Common myeloid progenitor, CD34-positive (primary cell): ENCODE measurements at regions of chr3 and their contacts with region 1.

Region 1: DNA sequence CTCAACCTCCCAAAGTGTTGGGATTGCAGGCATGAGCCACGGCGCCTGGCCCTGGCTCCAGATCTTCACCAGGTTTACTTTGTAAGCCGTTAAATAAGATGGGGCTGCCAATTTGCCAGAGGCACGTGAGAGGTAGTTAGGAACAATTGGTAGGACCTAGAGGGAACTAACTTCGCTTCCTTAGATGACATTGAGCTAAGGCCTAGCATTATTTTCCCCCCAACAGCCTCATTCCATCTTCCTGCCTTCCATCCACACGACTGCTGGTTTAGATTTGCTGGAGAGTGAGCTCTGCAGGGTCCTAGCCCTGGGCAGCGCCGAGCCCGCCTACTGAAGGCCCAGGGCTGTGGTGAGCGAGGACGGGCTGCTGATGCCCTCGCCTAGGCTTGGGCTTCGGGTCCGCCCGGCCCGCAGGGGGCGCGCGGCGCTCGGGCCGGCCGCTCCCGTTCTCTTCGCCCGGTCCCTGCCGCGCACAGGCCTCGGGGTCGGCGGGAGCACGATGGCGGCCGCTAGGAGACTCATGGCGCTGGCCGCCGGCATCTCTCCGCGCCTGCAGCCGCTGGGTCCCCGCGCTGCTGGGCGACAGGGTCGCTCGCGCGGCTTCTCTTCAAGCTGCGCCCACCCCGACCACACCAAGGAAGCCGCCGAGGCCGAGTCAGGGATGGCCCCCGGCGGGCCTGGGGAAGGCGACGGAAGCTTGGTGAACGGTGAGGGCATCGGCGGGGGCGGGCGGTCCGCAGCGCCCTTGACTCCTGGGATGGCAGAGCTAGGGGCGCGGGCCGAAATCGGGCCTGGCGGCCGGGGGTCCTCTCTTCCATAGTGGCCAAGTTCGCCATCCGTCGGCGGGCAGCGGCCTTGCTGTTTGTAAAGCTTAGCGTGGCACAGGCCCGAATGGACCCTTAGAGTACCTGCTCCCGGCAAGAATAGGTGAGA is 21.9 kb downstream of the DHX30 start:
- DNase-seq: peak; percentile 80 to 86 (median 84)
- H3K4me3 ChIP-seq: peak overlapping the region; percentile 58 to 93 (median 85)
- H3K27ac ChIP-seq: peak overlapping the region; percentile 18 to 85
- H3K4me1 ChIP-seq: peaks cover 0 to 21% (median 18%) of the 10 kb centered on the region in 4 experiments
- H3K27me3 ChIP-seq: no peaks in the 10 kb centered on the region

Region 2: DNA sequence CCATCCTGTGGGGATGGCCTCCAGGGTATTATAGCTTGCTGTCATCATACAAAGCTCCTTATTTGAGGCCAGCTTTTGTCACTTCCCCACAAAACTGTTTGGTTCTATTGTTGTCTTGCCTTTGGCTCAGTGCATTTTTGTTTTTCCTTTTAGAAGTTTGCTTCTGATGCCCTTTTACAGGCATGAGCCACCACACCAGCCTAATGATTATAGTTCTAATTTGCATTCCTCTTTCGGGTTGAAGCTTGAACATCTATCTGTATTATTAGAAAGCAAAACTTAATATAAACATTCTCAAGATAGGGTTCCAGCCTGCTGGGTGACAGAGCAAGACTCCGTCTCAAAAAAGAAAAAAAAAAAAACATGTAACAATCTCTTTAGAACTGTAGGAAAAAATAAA is 82.9 kb before region 1 on chr3:
- CTCF ChIA-PET with region 1: no interaction called
- POLR2A ChIA-PET with region 1: no interaction called
- DNase-seq: no peak
- H3K4me3 ChIP-seq: no peak overlapping the region
- H3K27ac ChIP-seq: no peak overlapping the region
- H3K4me1 ChIP-seq: no peaks in the 10 kb centered on the region
- H3K27me3 ChIP-seq: no peaks in the 10 kb centered on the region

Region 3: DNA sequence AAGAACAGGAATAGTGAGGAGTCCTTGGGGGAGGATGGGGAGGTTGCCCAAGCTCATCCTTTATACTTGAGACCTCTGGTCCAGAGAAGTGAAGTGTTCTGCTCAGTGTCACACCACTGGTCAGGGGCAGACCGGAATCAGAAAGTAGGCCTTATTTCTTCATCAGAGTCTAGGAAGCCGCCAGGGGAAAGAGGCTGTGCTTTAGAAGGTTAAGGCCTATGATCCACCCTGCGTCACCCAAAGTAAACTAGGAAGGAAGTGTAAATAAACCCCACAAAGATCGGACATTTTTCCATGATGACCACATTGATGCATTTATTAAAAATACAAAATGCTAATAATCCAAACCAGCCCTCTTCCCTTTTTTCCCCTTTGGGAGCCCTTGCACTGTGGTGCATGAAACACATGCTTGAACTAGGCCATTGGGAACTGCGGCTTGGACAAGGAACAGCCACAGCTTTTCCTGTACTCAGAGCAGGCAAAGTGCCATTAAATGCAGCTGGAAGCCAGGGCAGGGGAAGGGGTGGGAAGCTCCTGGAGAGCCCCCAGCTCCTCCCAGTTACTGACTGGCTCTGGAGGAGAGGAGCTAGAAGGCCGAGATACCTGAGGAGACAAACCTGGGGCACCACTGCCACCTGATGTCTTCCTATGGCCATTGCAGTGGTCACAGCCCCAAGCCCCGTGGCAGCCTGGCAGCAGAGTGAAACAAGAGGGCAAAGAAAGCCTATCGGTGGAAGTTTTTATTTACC is 326.4 kb after region 1 on chr3:
- CTCF ChIA-PET with region 1: interaction called, 17 read pairs
- POLR2A ChIA-PET with region 1: no interaction called
- DNase-seq: peak; percentile 72 to 85 (median 81)
- H3K4me3 ChIP-seq: no peak overlapping the region
- H3K27ac ChIP-seq: no peak overlapping the region
- H3K4me1 ChIP-seq: no peaks in the 10 kb centered on the region
- H3K27me3 ChIP-seq: no peaks in the 10 kb centered on the region

Region 4: DNA sequence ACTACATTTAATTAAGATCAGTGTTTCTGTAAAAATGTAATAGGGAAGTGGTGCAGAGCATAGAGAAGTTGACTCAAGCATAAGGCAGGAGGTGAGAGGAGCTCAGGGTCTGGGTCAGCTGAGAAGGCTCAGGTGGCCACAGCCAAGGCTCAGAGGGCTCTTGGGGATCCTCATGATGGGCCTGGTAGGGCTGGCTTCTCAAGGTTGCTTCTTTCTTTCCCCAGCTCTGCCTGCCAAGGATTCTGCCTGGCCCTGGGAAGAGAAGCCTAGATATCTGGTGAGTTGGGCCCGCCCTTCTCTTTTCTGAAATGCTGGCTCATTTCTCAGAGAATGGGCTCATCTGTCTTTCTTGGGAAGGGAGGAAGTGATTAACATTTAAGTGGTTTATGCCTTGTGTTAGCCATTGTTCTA is 422.6 kb after region 1 on chr3:
- CTCF ChIA-PET with region 1: no interaction called
- POLR2A ChIA-PET with region 1: no interaction called
- DNase-seq: peak in 2 of 3 donors; percentile 36 to 40
- H3K4me3 ChIP-seq: peak overlapping the region in 1 of 7 experiments; percentile 8
- H3K27ac ChIP-seq: peak overlapping the region in 1 of 2 experiments; percentile 43
- H3K4me1 ChIP-seq: peaks cover 0 to 26% (median 6%) of the 10 kb centered on the region in 4 experiments
- H3K27me3 ChIP-seq: no peaks in the 10 kb centered on the region